Mucosa of descending colon (tissue), 3 donors: ENCODE measurements at regions of chr1 and their contacts with region 1.

Region 1: GRCh38 chr1:31789259-31790065 is 25.3 kb upstream of the ADGRB2 start:
- DNase-seq: peak; percentile 96 to 99 (median 99)
- ATAC-seq: peak; percentile 90
- H3K4me3 ChIP-seq: no peak overlapping the region
- H3K4me1 ChIP-seq: peaks cover 3% of the 10 kb centered on the region
- CTCF ChIP-seq: peak; percentile 84

Region 2: GRCh38 chr1:31548907-31549808 is 240.3 kb before region 1 on chr1:
- intact Hi-C with region 1: no loop called
- DNase-seq: peak; percentile 74 to 99 (median 95)
- ATAC-seq: peak; percentile 94
- H3K4me3 ChIP-seq: no peak overlapping the region
- H3K4me1 ChIP-seq: peaks cover 6% of the 10 kb centered on the region
- CTCF ChIP-seq: peak; percentile 90

Region 3: DNA sequence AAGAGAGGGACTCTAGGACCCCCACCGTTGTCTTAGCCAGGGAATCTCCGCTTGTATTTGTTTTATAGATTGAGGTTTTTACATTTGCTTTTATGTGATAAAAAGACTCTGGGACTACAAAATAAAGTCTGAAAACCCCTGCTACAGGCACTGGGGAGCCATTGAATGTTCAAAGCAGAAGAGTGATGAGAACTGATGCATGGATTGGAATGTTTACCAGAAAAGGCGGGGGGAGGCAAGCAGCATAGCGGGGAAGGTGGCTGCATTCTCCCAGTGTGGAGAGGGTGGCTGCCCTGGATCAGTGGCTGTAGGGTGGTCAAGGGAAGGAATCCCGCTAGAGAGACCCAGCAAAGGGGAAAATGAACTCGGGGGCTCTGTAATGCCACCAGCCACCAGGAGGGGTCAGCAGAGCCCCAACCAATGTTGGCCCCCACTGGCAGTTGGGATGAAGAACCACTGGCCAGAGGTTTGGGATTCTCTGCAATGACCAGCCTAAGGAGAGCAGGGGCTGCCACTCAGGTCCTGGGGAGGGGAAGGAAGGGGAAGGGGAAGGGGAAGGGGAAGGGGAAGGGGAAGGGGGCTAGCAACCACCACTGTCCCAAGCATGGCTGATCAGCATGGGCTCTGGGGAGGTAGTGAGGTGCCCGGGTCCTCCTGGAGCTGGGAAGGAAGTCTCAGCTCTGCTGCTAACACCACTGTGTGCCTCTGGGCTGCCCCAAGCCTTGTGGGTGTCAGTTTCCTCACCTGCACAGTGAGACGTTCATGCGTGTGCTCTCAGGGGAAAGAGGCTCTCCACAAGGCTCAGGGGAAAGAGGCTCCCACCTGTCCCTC is 125.6 kb before region 1 on chr1:
- intact Hi-C with region 1: loop called (anchors 5 kb)
- DNase-seq: peak in 2 of 3 donors; percentile 76 to 78
- ATAC-seq: peak; percentile 42
- H3K4me3 ChIP-seq: no peak overlapping the region
- H3K4me1 ChIP-seq: peaks cover 18% of the 10 kb centered on the region
- CTCF ChIP-seq: peak; percentile 84

Region 4: GRCh38 chr1:31669786-31670592 is 119.5 kb before region 1 on chr1:
- intact Hi-C with region 1: loop called in 1 of 2 experiments (anchors 5 kb)
- DNase-seq: peak; percentile 90 to 95 (median 92)
- ATAC-seq: peak; percentile 81
- H3K4me3 ChIP-seq: no peak overlapping the region
- H3K4me1 ChIP-seq: peaks cover 37% of the 10 kb centered on the region
- CTCF ChIP-seq: no peak